ENCODE measurements at regions of chr12 and their contacts with region 1.

Region 1: GRCh38 chr12:92570056-92570753 is 132.6 kb upstream of the PLEKHG7 start:
- DNase-seq: peak; percentile 75
- H3K4me3 Mint-ChIP-seq: no peak overlapping the region
- H3K27ac Mint-ChIP-seq: no peak overlapping the region
- H3K4me1 Mint-ChIP-seq: no peaks in the 10 kb centered on the region
- H3K27me3 Mint-ChIP-seq: no peaks in the 10 kb centered on the region
- CTCF ChIP-seq: peak; percentile 79

Region 2: DNA sequence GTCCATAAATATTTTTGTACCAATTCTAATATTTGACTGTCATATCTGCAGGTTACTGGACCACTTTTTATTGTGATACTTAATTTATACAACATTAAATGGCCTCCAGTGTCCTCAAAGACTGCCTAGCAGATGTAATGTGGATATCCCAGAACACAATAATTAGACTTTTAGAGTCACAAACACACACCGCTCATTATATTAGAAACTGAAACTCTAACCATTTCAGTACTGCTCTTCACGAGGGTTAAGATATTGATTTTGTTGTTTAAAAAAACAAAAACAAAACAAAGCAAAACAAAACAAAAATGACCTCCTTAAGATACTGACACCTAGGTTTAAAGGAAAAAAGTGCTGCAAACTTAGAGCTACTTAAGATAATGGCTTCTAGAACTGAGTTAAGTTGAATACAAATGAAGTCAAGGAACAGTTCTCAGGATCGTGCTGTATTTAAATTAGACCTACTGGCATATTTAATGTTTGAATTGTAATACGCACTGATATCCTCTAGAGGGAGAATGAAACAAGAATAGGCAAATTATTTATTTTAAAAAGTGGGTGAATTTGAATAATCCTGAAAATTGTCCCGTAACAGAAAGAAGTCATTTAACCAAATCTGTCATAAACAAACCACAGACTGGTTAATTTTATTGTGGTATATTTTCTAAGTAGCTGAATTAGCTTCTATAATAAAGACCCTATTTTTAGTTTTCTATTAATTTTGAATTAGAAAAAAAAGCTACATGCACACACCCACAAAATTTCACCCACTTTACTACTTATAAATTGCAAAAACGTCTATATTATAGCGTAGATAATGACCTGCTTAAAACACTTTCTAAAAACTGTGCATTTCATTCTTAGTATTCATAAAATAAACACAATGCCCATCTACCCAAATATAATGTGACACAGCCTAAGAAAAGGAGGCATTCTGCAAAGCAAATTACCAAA is 992.3 kb before region 1 on chr12:
- CTCF ChIA-PET with region 1: no interaction called
- intact Hi-C with region 1: loop called (anchors 2 kb)
- DNase-seq: no peak
- H3K4me3 Mint-ChIP-seq: peak overlapping the region; percentile 54
- H3K27ac Mint-ChIP-seq: peak overlapping the region; percentile 50
- H3K4me1 Mint-ChIP-seq: no peaks in the 10 kb centered on the region
- H3K27me3 Mint-ChIP-seq: no peaks in the 10 kb centered on the region
- CTCF ChIP-seq: peak; percentile 43

Region 3: DNA sequence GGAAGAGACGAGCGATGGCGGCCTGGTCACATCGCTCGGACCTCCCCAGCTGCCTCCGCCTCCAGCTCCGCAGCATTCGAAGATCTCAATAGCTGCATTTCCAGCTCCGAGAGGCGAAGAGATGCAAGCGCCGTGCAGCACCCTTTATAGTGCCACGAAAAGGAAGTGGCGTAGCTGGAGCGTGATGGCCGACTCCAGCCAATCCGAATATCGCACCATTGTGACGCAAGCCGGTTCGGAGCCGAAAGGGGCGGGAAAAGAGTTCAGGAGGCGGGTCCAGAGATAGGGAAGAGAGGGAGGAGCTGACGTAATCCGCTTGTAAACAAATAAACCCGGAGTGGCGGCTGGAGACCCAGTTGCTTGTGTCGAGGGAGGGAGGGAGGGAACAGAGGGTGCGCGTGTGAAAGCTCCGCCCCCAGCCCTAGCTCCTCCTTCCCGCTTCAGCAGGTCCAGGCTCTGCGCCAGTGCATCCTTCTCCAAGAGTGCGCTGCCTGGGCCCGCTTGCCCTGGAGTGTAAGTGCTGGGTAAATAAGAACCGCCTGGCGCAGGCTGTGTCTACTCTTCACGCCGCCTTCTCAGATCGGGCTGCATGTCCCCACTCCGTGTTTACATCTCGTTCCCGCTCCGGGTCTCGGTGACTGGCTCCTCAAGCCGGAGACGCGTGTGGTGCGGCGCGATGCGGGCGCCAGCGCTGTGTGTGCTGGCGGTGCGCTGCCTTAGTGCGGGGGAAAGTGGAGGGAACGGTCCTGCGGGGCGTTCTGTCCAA is 424.3 kb before region 1 on chr12 and contains the start of gene BTG1:
- CTCF ChIA-PET with region 1: interaction called, 8 read pairs
- intact Hi-C with region 1: loop called (anchors 1 kb)
- DNase-seq: peak; percentile 99
- H3K4me3 Mint-ChIP-seq: peak within 1 kb of the TSS; percentile 87
- H3K27ac Mint-ChIP-seq: peak within 1 kb of the TSS; percentile 99
- H3K4me1 Mint-ChIP-seq: peaks cover 17% of the 10 kb centered on the region
- H3K27me3 Mint-ChIP-seq: peaks cover 10% of the 10 kb centered on the region
- CTCF ChIP-seq: no peak
- total RNA-seq, gene BTG1: 123 and 131 TPM in 2 replicates

Region 4: DNA sequence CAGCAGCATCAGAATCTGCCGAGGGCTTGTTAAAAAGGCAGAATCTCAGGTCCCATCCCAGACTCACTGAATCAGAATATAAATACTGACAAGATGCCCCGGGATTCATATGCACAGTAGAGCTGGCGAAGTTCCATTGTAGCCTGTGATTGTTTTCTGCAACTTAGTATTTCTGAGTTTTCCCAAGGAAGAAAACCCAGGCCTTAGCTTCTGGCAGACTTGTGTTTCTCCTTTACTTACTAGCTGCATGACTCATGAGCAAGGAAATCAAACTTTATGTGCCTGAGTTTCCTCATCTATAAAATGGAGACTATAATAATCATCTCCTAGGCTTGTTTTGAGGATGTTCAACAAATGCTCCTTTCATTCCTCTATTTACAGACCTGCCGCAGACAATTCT is 145.9 kb before region 1 on chr12:
- CTCF ChIA-PET with region 1: no interaction called
- intact Hi-C with region 1: loop called (anchors 5 kb)
- DNase-seq: no peak
- H3K4me3 Mint-ChIP-seq: no peak overlapping the region
- H3K27ac Mint-ChIP-seq: no peak overlapping the region
- H3K4me1 Mint-ChIP-seq: peaks cover 37% of the 10 kb centered on the region
- H3K27me3 Mint-ChIP-seq: no peaks in the 10 kb centered on the region
- CTCF ChIP-seq: no peak

Region 5: GRCh38 chr12:92546635-92547348 is 23.4 kb before region 1 on chr12:
- CTCF ChIA-PET with region 1: no interaction called
- intact Hi-C with region 1: loop called (anchors 1 kb)
- DNase-seq: peak; percentile 41
- H3K4me3 Mint-ChIP-seq: peak overlapping the region; percentile 17
- H3K27ac Mint-ChIP-seq: peak overlapping the region; percentile 74
- H3K4me1 Mint-ChIP-seq: peaks cover 68% of the 10 kb centered on the region
- H3K27me3 Mint-ChIP-seq: no peaks in the 10 kb centered on the region
- CTCF ChIP-seq: no peak

Region 6: DNA sequence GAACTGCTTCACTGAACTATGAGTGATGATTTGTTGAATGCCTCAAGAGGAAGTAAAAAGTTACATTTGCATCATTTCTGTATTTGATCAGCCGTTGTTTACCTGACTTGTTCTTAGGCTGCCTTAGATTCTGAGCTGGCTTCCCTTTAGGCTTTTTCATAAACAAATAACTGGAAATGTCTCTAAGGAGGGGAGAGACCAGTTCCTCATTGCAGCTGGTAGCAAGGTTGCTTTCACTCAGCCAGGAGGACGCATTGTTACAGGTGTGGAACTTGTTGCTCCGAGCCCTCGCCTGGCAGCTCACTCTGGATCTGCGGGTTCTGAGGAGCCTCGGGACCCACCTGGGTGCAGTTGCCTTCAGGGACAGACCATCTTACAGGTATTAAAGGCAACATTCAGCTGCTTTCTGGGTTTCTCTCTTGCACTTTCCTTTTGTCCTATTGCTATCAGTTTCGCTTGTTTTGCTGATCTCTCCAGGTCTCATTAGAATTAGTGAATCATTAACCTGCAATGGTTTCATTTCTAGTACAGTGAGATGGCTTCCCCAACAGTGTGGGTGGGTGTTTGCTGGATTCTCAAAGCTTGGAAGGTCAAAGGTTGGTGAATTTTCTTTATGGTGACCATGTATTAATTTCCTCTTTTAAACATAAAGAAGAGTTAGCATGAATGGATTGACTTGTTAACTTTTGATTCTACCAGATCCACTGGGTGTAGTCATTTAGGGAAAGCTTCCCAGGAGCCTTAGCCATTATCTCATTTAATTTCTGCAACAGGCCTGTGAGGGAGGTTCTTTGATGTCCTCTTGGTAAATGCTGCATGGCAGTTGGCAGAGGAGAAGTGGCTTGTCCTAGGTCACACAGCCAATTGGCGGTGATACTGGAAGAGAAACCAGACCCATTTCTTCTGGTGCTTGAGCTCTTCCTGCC is 132.8 kb after region 1 on chr12 and contains the start of gene PLEKHG7:
- CTCF ChIA-PET with region 1: interaction called, 10 read pairs
- intact Hi-C with region 1: no loop called
- DNase-seq: peak; percentile 36
- H3K4me3 Mint-ChIP-seq: peak within 1 kb of the TSS; percentile 70
- H3K27ac Mint-ChIP-seq: peak within 1 kb of the TSS; percentile 47
- H3K4me1 Mint-ChIP-seq: peaks cover 9% of the 10 kb centered on the region
- H3K27me3 Mint-ChIP-seq: no peaks in the 10 kb centered on the region
- CTCF ChIP-seq: no peak
- total RNA-seq, gene PLEKHG7: 1.3 and 2.5 TPM in 2 replicates

Region 7: GRCh38 chr12:92745856-92746540 is 175.8 kb after region 1 on chr12:
- CTCF ChIA-PET with region 1: no interaction called
- intact Hi-C with region 1: no loop called
- DNase-seq: peak; percentile 39
- H3K4me3 Mint-ChIP-seq: no peak overlapping the region
- H3K27ac Mint-ChIP-seq: peak overlapping the region; percentile 44
- H3K4me1 Mint-ChIP-seq: peaks cover 17% of the 10 kb centered on the region
- H3K27me3 Mint-ChIP-seq: no peaks in the 10 kb centered on the region
- CTCF ChIP-seq: no peak

Measured in Calu3 (cell line).